Right ventricle myocardium inferior (tissue), 1 donor: ENCODE measurements at regions of chr1 and their contacts with region 1.

Region 1: DNA sequence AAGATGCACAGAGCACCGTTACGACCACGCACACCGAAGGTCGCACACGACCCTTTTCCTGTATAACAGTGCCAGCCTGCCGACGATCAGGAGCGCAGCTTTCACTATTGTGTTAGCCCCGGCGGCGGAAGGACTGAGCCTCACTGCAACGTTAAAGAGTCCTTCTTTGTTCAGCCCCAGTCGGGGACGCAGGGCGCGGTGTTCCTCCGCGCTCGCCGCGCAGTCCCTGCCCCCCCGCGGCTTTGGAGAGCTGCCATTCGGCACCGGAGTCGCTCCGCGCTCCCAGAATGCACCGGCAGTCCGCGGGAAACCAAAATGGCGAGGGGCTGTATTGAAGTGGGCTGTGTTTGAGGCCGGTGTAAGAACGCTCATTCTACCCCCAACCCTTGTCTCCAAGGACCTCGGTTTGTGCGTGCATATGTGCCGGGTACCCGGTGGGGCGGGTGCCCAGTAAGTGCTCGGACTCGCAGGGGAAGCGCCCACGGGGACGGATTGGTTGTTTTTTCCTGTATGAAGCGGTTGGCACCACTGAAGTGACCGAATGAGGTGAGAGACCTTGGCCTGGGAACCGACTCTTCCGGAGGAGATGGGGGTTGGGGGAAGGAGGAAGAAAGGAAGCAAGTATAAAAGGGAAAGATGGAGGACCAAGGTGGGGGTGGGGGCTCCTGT is at the start of gene MTF2:
- DNase-seq: peak; percentile 95
- ATAC-seq: peak; percentile 97
- total RNA-seq, gene MTF2: 7.1 TPM

Region 2: GRCh38 chr1:93179886-93180722 is 101.0 kb after region 1 on chr1 and contains the start of gene TMED5:
- intact Hi-C with region 1: loop called (anchors 1 kb)
- DNase-seq: peak; percentile 98
- ATAC-seq: peak; percentile 99
- total RNA-seq, gene TMED5: 59.9 TPM

Region 3: DNA sequence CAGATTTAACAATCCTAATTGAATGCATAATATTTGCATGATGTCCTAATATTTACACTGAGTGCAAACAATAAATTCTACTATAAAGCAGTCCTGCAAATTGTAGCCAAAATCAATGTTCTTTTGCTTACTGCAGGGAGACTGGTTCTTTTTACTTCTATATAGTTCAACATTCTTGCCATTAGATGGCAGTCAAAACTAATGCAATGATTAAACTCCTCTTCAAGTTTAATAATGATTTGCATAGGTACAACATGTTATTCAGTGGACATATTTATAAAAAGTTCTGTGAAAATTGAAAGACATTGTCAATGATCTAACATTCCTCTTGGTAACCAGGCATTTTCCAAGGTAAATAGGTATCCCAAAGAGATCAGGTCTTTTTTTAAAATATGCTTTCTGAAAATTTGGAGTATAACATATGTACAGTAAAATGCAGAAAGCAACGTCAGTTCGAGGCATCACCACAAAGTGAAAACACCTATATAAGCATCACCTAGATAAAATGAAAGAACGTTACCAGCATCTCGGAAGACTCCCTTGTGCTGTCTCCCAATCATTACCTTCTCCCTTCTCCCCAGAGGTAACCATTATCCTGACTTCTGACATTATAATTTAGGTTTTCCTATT is 359.0 kb after region 1 on chr1:
- intact Hi-C with region 1: no loop called
- DNase-seq: no peak
- ATAC-seq: no peak